A549 (cell line): ENCODE measurements at regions of chr2 and their contacts with region 1.

Region 1: DNA sequence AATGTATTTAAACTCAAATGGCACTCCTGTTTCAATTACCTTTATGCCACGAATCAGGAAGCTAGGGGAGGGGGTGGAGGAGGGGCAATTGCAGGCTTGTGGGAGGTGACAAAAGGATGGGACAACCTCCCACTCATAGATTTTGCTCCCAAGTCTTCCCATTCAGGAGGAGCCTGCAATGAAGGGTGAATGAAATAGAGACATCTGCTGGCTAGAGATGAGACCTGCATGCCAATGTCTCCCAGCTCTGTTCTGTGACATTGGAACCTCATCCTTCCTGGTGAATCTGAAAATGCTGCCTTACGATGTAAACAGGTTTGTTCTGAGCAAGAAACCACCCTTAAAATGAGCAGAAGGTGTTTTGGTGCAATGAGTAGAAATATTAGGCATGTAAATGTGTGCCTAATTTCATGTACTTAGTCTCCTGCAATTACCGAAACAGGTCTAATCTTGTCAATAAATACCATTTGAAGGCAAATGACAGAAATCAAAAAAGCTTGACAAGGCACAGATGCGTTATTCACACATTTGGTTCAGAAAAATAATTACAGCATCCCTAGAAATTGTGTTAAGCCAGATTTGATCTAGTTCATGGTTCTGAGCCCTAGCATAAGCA is 2.7 kb upstream of the PID1 start:
- DNase-seq: peak; percentile 69 to 85
- ATAC-seq: peak; percentile 81 to 94
- H3K4me3 ChIP-seq: peak overlapping the region; percentile 27; the same call in 2 of the 3 replicates
- H3K27ac ChIP-seq: peak overlapping the region in 1 of 2 experiments; percentile 40; a peak in 2 of 6 replicates
- H3K4me1 ChIP-seq: peaks cover 4% of the 10 kb centered on the region; the same call in 1 of the 3 replicates
- CTCF ChIP-seq: peak; percentile 72
- EP300 ChIP-seq: no peak
- POLR2A ChIP-seq: no peak
- RAD21 ChIP-seq: peak; percentile 64 to 66

Region 2: GRCh38 chr2:229133155-229133772 is 140.6 kb before region 1 on chr2:
- CTCF ChIA-PET with region 1: interaction called, 61 read pairs
- POLR2A ChIA-PET with region 1: no interaction called
- DNase-seq: peak; percentile 3 to 62
- ATAC-seq: peak; percentile 77 to 90; a peak in 4 of 6 replicates
- H3K4me3 ChIP-seq: no peak overlapping the region
- H3K27ac ChIP-seq: no peak overlapping the region
- H3K4me1 ChIP-seq: no peaks in the 10 kb centered on the region
- CTCF ChIP-seq: peak; percentile 70
- EP300 ChIP-seq: no peak
- POLR2A ChIP-seq: no peak
- RAD21 ChIP-seq: peak; percentile 83 to 86

Region 3: GRCh38 chr2:229205704-229206103 is 68.1 kb before region 1 on chr2:
- CTCF ChIA-PET with region 1: no interaction called
- POLR2A ChIA-PET with region 1: no interaction called
- DNase-seq: no peak
- ATAC-seq: no peak
- H3K4me3 ChIP-seq: no peak overlapping the region
- H3K27ac ChIP-seq: no peak overlapping the region
- H3K4me1 ChIP-seq: no peaks in the 10 kb centered on the region
- CTCF ChIP-seq: no peak
- EP300 ChIP-seq: no peak
- POLR2A ChIP-seq: no peak
- RAD21 ChIP-seq: no peak

Region 4: DNA sequence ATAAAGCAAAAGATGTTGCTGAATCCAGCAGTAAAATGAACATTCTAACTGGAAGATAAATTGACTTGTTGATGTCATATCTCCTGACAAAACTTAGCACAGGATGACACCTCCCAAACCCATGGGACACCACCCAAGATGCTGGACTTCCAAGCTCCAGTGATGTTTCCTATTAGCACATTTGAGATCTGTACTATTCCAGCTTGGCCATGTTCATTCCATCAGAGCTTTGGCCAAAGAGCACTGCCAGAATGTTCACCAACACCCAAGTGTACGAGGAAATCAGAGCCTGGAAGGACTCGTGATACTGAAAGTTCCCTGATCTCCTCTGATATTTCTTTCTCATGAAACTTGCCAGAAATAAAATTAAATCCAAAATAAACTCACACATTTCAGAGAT is 47.4 kb before region 1 on chr2:
- CTCF ChIA-PET with region 1: no interaction called
- POLR2A ChIA-PET with region 1: no interaction called
- DNase-seq: no peak
- ATAC-seq: no peak
- H3K4me3 ChIP-seq: no peak overlapping the region
- H3K27ac ChIP-seq: no peak overlapping the region
- H3K4me1 ChIP-seq: no peaks in the 10 kb centered on the region
- CTCF ChIP-seq: no peak
- EP300 ChIP-seq: no peak
- POLR2A ChIP-seq: no peak
- RAD21 ChIP-seq: no peak

Region 5: DNA sequence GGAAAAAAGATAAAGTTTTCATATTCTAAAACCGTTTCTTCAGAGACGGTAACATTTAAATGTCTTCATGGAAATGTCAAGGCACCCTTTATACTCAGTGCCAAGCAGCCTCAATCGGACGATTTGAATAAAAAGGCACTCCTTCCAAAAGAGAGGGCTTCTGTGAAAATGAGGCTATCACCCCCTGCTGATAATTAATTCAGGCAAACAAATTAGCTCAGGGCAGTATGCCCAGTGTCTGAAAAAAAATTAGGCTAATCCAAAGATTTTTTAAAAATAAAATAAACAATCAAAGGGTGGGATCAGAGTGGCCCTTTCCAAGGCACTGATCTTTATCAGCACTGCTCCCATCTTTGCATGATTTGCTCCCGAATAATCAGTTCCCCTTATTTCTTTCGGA is 148.2 kb after region 1 on chr2:
- CTCF ChIA-PET with region 1: no interaction called
- POLR2A ChIA-PET with region 1: no interaction called
- DNase-seq: no peak
- ATAC-seq: no peak
- H3K4me3 ChIP-seq: no peak overlapping the region
- H3K27ac ChIP-seq: no peak overlapping the region
- H3K4me1 ChIP-seq: no peaks in the 10 kb centered on the region
- CTCF ChIP-seq: no peak
- EP300 ChIP-seq: no peak
- POLR2A ChIP-seq: no peak
- RAD21 ChIP-seq: no peak